ENCODE measurements at regions of chr18 and their contacts with region 1.

Region 1: DNA sequence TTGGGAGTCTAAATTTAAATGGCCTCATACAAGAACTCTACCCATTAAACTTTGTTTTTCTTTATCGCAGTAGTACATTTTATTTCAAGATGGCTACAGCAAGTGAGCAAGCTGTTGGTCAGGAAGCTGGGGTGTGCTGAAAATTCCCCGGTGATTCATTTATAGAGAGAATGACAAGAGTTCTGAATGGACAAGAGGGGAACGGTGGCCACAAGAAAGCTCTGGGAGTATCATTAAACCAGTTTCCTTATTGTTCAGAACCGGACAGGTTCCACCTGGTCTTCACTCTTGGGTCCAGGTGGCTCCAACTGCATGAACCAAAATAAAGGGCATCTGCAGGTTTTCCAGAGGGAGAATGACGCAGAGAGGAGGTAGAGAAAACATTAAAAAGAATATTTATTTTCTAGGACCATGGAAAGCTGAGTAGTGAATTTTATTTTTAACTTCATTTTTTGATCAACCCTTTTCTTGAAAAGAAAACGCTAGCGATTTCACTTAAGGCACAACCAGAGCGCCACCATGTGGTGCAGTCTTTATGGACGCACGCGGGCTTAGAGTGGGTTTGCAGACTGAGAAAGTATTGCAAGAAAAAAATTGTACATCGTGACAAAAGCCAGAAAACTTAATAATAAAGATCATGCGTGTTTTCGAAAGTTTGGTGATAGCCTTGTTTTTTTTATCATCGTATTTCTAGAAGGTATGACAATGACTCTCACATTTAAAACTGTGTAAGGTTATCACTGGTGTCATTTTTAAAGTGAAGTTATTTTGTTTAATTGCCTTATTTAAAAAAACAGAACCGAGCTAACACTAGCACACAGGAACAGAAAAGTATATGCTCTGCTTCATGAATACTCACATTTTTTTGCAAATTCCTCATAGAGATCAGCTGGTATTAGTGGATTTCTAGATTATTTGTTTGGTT is 97.9 kb upstream of the NOL4 start:
- DNase-seq: no peak
- ATAC-seq: no peak

Region 2: GRCh38 chr18:33839441-33840211 is 483.0 kb before region 1 on chr18:
- intact Hi-C with region 1: loop called (anchors 10 kb)
- DNase-seq: no peak
- ATAC-seq: no peak

Region 3: DNA sequence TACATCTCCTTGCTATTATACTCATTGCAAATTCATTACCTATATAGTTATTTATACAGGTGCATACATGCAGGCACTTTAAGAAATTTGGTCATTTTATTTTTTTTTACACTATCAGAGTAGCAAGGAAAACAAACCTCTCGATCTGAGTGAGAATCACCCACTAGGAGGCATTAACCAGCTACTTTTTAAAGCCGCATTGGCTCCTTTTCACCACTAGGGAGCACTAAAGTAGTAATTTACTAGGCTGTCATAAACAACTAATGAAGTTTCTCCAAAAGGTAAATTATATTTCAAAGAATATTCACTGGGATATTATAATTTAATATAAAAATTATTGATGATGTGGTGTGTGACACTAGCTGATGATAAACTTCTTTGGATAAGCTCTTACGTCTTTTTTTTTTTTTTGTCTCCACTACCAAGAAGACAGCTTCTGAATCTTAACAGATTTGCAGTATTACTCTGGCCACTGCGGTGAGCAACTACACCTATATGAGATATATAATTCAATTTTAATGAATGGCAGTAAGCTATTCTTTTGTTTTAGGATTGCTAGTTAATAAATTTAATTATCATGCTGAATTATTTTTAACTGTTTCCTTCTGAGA is 199.8 kb before region 1 on chr18:
- intact Hi-C with region 1: loop called (anchors 5 kb)
- DNase-seq: no peak
- ATAC-seq: no peak

Region 4: DNA sequence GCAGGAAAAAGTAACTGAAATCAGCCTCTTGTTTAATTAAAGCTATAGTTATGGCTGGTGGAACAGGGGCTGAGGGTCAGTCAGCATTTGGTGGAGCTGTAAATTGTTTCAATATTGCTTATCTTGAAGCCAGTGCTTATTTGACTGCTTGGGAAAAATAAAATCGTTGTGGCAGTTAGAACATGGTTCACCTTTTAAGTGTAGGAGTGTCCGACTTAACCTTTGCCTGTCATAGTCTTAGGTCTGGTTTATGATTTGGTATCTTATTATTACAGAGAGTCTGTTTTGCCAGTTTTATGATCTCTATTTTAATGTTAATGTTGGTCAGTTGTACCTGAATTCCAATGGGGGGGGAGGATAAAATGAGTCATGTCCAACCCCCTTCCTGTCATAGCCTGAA is 70.7 kb before region 1 on chr18:
- intact Hi-C with region 1: no loop called
- DNase-seq: no peak
- ATAC-seq: no peak